Activated naive CD4-positive, alpha-beta T cell treated with anti-CD3 and anti-CD28 coated beads, Interleukin-2, amount 10 ng/mL, durations not matched to agents 7 days and 5 days (primary cell): ENCODE measurements at regions of chr1 and their contacts with region 1.

Region 1: GRCh38 chr1:115706587-115707425 is 61.7 kb downstream of the CASQ2 start:
- DNase-seq: no peak
- H3K4me3 Mint-ChIP-seq: no peak overlapping the region
- H3K27ac Mint-ChIP-seq: no peak overlapping the region
- H3K4me1 Mint-ChIP-seq: no peaks in the 10 kb centered on the region
- H3K27me3 Mint-ChIP-seq: peaks cover 21% of the 10 kb centered on the region

Region 2: DNA sequence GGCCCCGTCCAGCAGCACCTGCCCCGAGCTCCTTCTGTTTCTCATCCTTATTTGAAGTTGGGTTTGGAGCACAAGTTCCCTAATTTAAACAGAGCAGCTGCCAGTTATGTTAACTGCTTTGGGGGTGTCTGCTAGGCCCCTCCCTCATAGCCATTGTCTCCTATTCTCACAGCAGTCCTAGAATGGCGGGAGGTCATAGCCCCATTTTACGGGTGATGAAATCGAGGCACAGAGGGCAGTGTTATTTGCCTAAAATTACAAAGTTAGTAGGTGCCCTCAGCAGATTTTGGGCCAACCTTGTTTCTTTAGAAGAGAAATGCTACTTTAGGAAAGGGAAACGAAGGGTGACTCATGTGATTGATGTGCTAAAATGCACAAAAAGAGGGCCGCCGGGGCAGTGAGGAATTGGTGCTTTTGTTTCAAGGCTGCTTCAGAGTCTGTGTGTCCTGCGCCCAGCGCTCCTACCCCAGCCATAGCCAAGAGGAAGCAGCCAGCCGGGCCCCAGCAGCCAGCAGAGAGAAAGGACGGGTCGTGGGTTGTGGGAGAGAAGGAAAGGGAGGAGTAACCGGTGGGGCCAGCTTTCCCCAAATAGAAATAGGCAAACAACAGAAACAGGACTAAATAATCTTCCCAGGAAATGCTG is 52.0 kb before region 1 on chr1:
- CTCF ChIA-PET with region 1: no interaction called
- DNase-seq: no peak
- H3K4me3 Mint-ChIP-seq: no peak overlapping the region
- H3K27ac Mint-ChIP-seq: no peak overlapping the region
- H3K4me1 Mint-ChIP-seq: peaks cover 25% of the 10 kb centered on the region
- H3K27me3 Mint-ChIP-seq: peaks cover 4% of the 10 kb centered on the region

Region 3: DNA sequence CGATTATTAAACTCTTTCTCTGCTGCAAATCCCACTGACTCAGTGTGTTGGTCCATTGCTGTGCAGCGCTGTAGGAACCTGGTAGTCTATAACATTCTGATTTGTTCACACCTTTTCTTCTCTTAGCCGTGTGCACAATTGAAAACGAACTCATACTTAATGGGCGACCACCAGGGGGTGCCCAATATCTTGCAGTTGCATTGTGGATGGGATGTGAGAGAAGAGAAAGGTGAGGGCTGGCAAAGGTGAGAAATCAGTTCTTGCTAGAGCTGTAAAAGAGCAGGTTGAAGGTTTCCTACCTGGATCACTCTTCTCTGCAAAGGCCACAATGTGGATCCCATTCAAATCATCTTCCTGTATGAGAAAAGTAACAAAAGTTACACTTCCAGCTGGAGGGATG is 10.7 kb after region 1 on chr1:
- CTCF ChIA-PET with region 1: interaction called, 22 read pairs
- DNase-seq: peak; percentile 60
- H3K4me3 Mint-ChIP-seq: no peak overlapping the region
- H3K27ac Mint-ChIP-seq: no peak overlapping the region
- H3K4me1 Mint-ChIP-seq: no peaks in the 10 kb centered on the region
- H3K27me3 Mint-ChIP-seq: peaks cover 23% of the 10 kb centered on the region